Right lobe of liver (tissue), 6 donors: ENCODE measurements at regions of chr1 and their contacts with region 1.

Region 1: DNA sequence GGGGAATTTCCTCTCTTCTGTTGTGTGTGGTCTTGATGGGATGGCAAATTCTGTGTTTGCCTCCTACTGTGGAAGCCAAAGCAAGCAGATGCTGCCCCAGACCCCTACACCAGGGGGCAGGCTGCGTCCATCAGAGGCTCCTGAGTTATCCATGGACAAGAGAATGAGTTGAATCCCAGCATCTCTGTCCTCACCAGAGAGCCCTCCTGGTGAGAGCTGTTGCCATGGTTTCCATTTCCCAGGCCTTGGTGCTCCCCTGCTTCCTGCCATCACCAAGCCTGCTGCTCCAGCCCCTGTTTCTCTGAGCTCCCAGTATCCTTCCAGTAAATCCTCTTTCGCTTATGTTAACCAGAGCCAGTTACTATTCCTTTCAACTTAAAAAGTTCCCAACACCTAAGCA is 20.4 kb upstream of the GNG12 start:
- DNase-seq: peak; percentile 61 to 70 (median 65)
- ATAC-seq: peak; percentile 80 to 88 (median 86)
- H3K4me3 ChIP-seq: no peak overlapping the region
- H3K27ac ChIP-seq: no peak overlapping the region
- H3K4me1 ChIP-seq: no peaks in the 10 kb centered on the region
- H3K27me3 ChIP-seq: no peaks in the 10 kb centered on the region
- CTCF ChIP-seq: peak; percentile 69 to 86 (median 75)
- POLR2A ChIP-seq: no peak

Region 2: DNA sequence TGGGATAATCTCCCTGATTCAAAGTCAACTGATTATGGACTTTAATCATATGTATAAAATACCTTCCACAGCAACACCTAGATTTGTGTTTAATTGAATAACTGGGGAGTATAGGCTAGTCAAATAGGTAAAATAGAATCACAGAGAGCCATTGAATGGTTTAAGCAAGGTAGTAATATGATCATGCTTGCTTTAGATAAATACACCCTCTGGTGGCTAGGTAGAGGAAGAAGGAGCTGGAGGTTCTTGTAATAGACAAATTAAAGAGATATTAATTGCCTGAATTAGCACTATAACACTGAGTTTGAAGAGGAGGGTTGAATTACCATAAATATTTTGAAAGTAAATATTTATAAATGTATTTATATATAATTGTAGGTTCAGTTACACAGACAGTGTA is 156.4 kb after region 1 on chr1:
- intact Hi-C with region 1: loop called in 1 of 2 experiments (anchors 10 kb)
- DNase-seq: no peak
- ATAC-seq: peak; percentile 48 to 75 (median 57)
- H3K4me3 ChIP-seq: no peak overlapping the region
- H3K27ac ChIP-seq: no peak overlapping the region
- H3K4me1 ChIP-seq: no peaks in the 10 kb centered on the region
- H3K27me3 ChIP-seq: no peaks in the 10 kb centered on the region
- CTCF ChIP-seq: peak; percentile 37 to 48 (median 40)
- POLR2A ChIP-seq: no peak

Region 3: GRCh38 chr1:68103884-68104554 is 250.3 kb after region 1 on chr1:
- intact Hi-C with region 1: loop called in 1 of 2 experiments (anchors 10 kb)
- DNase-seq: no peak
- ATAC-seq: no peak
- H3K4me3 ChIP-seq: no peak overlapping the region
- H3K27ac ChIP-seq: no peak overlapping the region
- H3K4me1 ChIP-seq: no peaks in the 10 kb centered on the region
- H3K27me3 ChIP-seq: no peaks in the 10 kb centered on the region
- CTCF ChIP-seq: no peak
- POLR2A ChIP-seq: no peak